T-cell (primary cell): ENCODE measurements at regions of chr9 and their contacts with region 1.

Region 1: GRCh38 chr9:5186416-5187169 is 1.2 kb upstream of the INSL6 start:
- DNase-seq: peak; percentile 10 to 83 (median 53)
- ATAC-seq: peak; percentile 84 to 95 (median 88)
- H3K4me3 ChIP-seq: no peak overlapping the region
- H3K4me3 Mint-ChIP-seq: no peak overlapping the region
- H3K27ac ChIP-seq: no peak overlapping the region
- H3K27ac Mint-ChIP-seq: no peak overlapping the region
- H3K4me1 ChIP-seq: no peaks in the 10 kb centered on the region
- H3K4me1 Mint-ChIP-seq: peaks cover 6 to 14% (median 10%) of the 10 kb centered on the region in 3 donors
- H3K27me3 ChIP-seq: no peaks in the 10 kb centered on the region
- H3K27me3 Mint-ChIP-seq: peaks cover 0 to 3% of the 10 kb centered on the region in 2 donors

Region 2: GRCh38 chr9:5425006-5425628 is 238.5 kb after region 1 on chr9:
- CTCF ChIA-PET with region 1: interaction called, 5 to 46 read pairs
- POLR2A ChIA-PET with region 1: no interaction called
- DNase-seq: peak in 1 of 35 experiments; percentile 66
- ATAC-seq: peak; percentile 50 to 64 (median 56)
- H3K4me3 ChIP-seq: no peak overlapping the region
- H3K4me3 Mint-ChIP-seq: no peak overlapping the region
- H3K27ac ChIP-seq: no peak overlapping the region
- H3K27ac Mint-ChIP-seq: no peak overlapping the region
- H3K4me1 ChIP-seq: no peaks in the 10 kb centered on the region
- H3K4me1 Mint-ChIP-seq: peaks cover 0 to 6% (median 5%) of the 10 kb centered on the region in 3 donors
- H3K27me3 ChIP-seq: no peaks in the 10 kb centered on the region
- H3K27me3 Mint-ChIP-seq: no peaks in the 10 kb centered on the region

Region 3: GRCh38 chr9:5437254-5438216 is 250.9 kb after region 1 on chr9 and contains the start of gene PLGRKT:
- CTCF ChIA-PET with region 1: interaction called, 5 to 12 read pairs
- POLR2A ChIA-PET with region 1: no interaction called
- DNase-seq: peak; percentile 76 to 94 (median 88)
- ATAC-seq: peak; percentile 95 to 99 (median 98)
- H3K4me3 ChIP-seq: peak within 1 kb of the TSS; percentile 77 to 84
- H3K4me3 Mint-ChIP-seq: peak within 1 kb of the TSS; percentile 89 to 95 (median 91)
- H3K27ac ChIP-seq: peak within 1 kb of the TSS; percentile 93
- H3K27ac Mint-ChIP-seq: peak within 1 kb of the TSS; percentile 98 to 99
- H3K4me1 ChIP-seq: peaks cover 15 to 22% of the 10 kb centered on the region in 2 experiments
- H3K4me1 Mint-ChIP-seq: peaks cover 28 to 37% (median 37%) of the 10 kb centered on the region in 3 donors
- H3K27me3 ChIP-seq: no peaks in the 10 kb centered on the region
- H3K27me3 Mint-ChIP-seq: no peaks in the 10 kb centered on the region
- total RNA-seq, gene PLGRKT: 15.4 to 21.3 (median 19.3) TPM